ENCODE measurements at regions of chr11 and their contacts with region 1.

Region 1: GRCh38 chr11:96389720-96390487 is at the starts of genes CCDC82 and JRKL:
- DNase-seq: peak; percentile 91 to 99

Region 2: GRCh38 chr11:95863486-95864140 is 526.3 kb before region 1 on chr11:
- in situ Hi-C with region 1: loop called (anchors 25 kb)
- DNase-seq: no peak

Region 3: DNA sequence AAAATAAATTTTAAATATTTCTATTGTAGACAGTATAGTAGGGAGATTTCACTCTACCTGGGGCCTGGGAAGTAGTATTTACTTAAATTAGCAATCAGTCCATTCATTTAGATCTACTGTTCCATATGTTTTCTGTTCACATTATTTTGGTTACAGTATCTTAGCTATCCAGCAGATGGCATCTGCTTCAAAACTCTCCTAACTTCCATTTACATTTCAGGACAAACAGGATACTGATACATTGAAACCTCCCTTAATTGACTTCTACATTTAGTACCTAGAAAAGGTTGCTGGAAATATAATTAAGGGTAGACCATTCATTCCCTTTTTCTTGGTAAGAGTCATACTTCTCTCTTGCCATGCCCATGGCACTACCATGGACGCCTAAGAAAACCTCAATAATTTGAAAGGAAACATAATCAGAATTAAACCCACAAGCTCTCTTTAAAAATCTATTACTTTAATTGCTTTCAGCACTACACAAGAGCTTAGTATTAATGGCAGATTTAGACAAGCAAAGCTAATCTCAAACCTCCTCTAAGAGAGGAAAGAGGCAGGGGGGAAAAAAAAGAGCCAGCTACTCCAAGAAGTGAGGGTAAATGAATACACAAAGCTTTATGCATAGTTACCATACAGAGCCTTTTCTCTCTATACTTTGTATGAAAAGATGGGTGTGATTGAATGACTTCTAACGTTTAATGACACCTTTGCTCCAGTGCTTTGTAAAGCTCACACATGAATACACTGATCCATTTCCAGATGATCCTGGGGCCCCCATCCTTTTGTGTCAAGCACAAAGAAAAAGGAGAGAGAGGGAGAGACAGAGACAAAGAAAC is 334.8 kb before region 1 on chr11:
- in situ Hi-C with region 1: loop called (anchors 25 kb)
- DNase-seq: peak; percentile 25 to 76

Region 4: GRCh38 chr11:96554236-96554820 is 164.4 kb after region 1 on chr11:
- in situ Hi-C with region 1: no loop called
- DNase-seq: no peak

Measured in T47D (cell line).